ENCODE measurements at regions of chr17 and their contacts with region 1.

Region 1: GRCh38 chr17:43338886-43339516 is 59.8 kb upstream of the ARL4D start:
- DNase-seq: peak; percentile 82
- H3K4me3 ChIP-seq: no peak overlapping the region
- H3K27ac ChIP-seq: no peak overlapping the region
- H3K4me1 ChIP-seq: peaks cover 0 to 10% (median 3%) of the 10 kb centered on the region in 4 donors
- H3K27me3 ChIP-seq: no peaks in the 10 kb centered on the region
- CTCF ChIP-seq: peak; percentile 69 to 78 (median 76)
- EP300 ChIP-seq: no peak
- POLR2A ChIP-seq: no peak

Region 2: DNA sequence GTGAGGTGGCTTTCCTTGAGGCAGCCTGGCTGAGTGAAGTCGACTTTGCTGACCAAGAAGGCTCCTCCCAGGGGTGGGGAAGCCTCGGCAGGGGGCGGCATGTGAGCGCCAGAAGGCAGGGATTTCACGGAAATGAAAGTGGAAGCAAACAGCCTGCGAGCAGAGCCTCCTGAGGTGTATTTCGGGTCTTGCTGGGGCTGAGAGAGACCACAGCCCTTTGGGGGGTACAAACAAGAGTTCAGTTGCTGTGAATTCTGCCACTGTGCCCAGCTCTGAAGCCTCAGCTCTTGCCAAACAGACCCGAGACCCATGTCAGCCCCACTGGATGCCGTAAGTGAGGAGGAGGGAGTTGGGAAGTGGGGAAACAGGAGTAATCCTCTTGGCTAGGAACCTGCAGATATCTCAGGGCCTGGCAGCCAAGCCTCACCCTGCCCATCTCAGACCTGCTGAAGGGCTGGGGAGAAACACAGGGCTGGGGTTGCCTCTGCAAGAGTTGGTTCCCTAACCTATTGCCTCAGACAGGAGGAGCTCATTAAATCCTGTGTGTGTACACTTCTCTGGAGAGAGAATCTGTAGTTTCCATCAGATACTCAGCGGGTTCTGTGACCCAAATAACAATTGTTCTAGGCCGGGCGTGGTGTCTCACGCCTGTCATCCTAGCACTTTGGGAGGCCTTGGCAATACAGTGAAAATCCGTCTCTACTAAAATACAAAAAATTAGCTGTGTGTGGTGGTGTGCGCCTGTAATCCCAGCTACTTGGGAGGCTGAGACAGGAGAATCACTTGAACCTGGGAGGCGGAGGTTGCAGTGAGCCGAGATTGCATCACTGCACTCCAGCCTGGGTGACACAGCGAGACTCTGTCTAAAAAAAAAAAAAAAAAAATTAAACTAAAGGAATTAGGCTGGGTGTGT is 332.1 kb before region 1 on chr17 and contains the start of gene IFI35:
- in situ Hi-C with region 1: loop called in 1 of 4 experiments (anchors 25 kb)
- intact Hi-C with region 1: no loop called
- DNase-seq: peak; percentile 93
- H3K4me3 ChIP-seq: peak within 1 kb of the TSS; percentile 41 to 81 (median 66)
- H3K27ac ChIP-seq: peak within 1 kb of the TSS; percentile 90 to 97 (median 96)
- H3K4me1 ChIP-seq: peaks cover 6 to 49% (median 28%) of the 10 kb centered on the region in 4 donors
- H3K27me3 ChIP-seq: no peaks in the 10 kb centered on the region
- CTCF ChIP-seq: peak in 3 of 5 experiments; percentile 21 to 38 (median 31)
- EP300 ChIP-seq: no peak
- POLR2A ChIP-seq: peak; percentile 84
- total RNA-seq, gene IFI35: 11.5 to 81.1 (median 47.2) TPM

Region 3: GRCh38 chr17:43024407-43025289 is 314.4 kb before region 1 on chr17 and contains the start of gene RND2:
- in situ Hi-C with region 1: loop called in 2 of 4 experiments (anchors 25 kb)
- intact Hi-C with region 1: no loop called
- DNase-seq: peak; percentile 87
- H3K4me3 ChIP-seq: peak within 1 kb of the TSS; percentile 35 to 57 (median 43)
- H3K27ac ChIP-seq: peak within 1 kb of the TSS; percentile 67 to 86 (median 74)
- H3K4me1 ChIP-seq: peaks cover 6 to 31% (median 25%) of the 10 kb centered on the region in 4 donors
- H3K27me3 ChIP-seq: peaks cover 3% of the 10 kb centered on the region
- CTCF ChIP-seq: peak; percentile 52 to 80 (median 64)
- EP300 ChIP-seq: no peak
- POLR2A ChIP-seq: peak; percentile 21
- total RNA-seq, gene RND2: 0.41 to 0.64 TPM in 2 of 4 donors, not detected in the others

Region 4: GRCh38 chr17:43175816-43176570 is 163.0 kb before region 1 on chr17:
- in situ Hi-C with region 1: loop called in 1 of 4 experiments (anchors 25 kb)
- intact Hi-C with region 1: no loop called
- DNase-seq: peak; percentile 42
- H3K4me3 ChIP-seq: peak overlapping the region in 1 of 4 donors; percentile 25
- H3K27ac ChIP-seq: peak overlapping the region; percentile 77 to 99 (median 91)
- H3K4me1 ChIP-seq: peaks cover 29 to 71% (median 59%) of the 10 kb centered on the region in 4 donors
- H3K27me3 ChIP-seq: no peaks in the 10 kb centered on the region
- CTCF ChIP-seq: no peak
- EP300 ChIP-seq: no peak
- POLR2A ChIP-seq: peak; percentile 59

Measured in transverse colon (tissue), 4 donors.